Heart left ventricle (tissue), 16 donors: ENCODE measurements at regions of chr18 and their contacts with region 1.

Region 1: DNA sequence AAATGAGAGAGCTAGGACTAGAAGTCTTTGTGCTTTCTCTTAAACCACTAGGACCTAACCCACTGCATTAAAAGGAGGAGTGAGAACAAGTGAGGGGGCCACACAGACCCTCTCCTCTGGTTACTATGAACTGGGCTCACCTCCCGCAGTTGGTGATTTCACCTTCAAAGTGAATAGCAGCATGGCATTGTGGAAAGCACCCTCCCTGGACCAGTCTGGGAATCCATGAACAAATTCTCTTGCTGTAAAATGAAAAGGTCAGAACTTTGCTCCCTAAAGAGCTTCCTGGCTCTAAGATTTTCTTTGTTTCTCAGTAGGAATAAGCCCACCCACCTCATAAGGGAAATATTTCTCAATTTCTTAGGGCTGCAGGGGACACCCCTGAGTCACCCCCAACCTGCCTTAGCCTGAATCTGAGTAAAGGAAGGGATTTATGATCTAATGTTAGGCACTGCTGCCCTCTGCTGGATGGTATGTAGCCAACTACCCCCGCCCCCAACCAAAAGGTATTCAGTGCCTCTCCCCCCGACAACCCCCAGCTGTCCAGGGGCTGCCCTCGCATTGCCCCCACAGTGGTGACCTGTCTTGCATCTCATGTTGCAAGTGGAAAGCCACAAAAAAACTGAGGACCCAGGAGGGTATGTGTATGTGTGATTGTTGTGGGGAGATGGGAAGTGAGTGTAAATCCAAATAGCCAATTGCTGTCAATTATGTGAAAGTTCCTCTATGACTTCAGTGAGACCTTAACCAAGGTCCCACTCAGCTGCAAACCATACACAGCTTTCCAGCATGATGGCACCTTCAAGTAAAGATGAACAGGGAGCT is 230.9 kb upstream of the SLC14A2 start:
- DNase-seq: peak in 4 of 5 donors; percentile 30 to 41 (median 39)
- ATAC-seq: peak; percentile 56 to 77 (median 72)
- H3K4me3 ChIP-seq: no peak overlapping the region
- H3K27ac ChIP-seq: no peak overlapping the region
- H3K4me1 ChIP-seq: peaks cover 0 to 9% (median 0%) of the 10 kb centered on the region in 12 donors
- H3K27me3 ChIP-seq: peaks cover 0 to 6% (median 0%) of the 10 kb centered on the region in 9 donors
- CTCF ChIP-seq: peak; percentile 43 to 79 (median 64)
- POLR2A ChIP-seq: no peak

Region 2: DNA sequence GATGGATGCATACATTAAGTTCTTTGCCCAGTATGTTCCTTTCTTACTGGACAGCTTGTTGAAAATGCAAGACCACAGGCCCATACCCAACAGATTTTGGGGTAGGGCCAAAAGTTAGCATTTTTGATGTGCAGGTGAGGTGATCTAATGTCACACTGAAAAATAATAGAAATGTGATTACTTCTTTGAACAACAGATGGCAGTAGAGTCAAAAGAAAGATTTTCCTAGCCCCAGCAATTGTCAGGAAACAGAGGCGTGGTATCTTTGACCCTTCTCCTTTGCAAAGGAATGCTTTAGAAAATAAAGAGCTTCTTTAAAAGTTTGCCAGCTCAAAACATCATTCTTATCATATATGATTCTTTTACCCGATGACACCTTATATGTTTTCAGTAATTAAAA is 1763.4 kb before region 1 on chr18:
- intact Hi-C with region 1: loop called in 9 of 10 experiments (anchors 5 to 10 kb)
- DNase-seq: no peak
- ATAC-seq: peak in 2 of 4 donors; percentile 46 to 57
- H3K4me3 ChIP-seq: no peak overlapping the region
- H3K27ac ChIP-seq: no peak overlapping the region
- H3K4me1 ChIP-seq: no peaks in the 10 kb centered on the region
- H3K27me3 ChIP-seq: no peaks in the 10 kb centered on the region
- CTCF ChIP-seq: peak; percentile 41 to 71 (median 54)
- POLR2A ChIP-seq: no peak

Region 3: DNA sequence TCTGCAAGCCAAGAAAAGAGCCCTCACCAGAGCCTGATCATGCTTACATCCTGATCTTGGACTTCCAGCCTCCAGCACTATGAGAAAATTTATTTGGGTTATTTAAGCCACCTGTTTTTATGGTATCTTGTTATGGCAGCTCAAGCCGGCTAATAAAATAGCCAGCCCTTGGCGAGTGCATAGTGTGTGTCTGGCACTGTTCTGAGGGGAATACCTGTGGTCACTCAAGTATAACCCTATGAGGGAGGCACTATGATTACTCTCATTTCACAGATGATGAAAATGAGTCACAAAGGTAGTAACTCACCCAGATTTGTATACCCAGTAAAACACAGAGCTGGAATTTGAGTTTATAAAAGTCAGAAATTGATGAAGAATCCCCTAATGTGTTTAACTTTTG is 1260.6 kb before region 1 on chr18:
- intact Hi-C with region 1: loop called in 2 of 10 experiments (anchors 5 to 10 kb)
- DNase-seq: no peak
- ATAC-seq: no peak
- H3K4me3 ChIP-seq: no peak overlapping the region
- H3K27ac ChIP-seq: no peak overlapping the region
- H3K4me1 ChIP-seq: no peaks in the 10 kb centered on the region
- H3K27me3 ChIP-seq: no peaks in the 10 kb centered on the region
- CTCF ChIP-seq: no peak
- POLR2A ChIP-seq: no peak

Region 4: DNA sequence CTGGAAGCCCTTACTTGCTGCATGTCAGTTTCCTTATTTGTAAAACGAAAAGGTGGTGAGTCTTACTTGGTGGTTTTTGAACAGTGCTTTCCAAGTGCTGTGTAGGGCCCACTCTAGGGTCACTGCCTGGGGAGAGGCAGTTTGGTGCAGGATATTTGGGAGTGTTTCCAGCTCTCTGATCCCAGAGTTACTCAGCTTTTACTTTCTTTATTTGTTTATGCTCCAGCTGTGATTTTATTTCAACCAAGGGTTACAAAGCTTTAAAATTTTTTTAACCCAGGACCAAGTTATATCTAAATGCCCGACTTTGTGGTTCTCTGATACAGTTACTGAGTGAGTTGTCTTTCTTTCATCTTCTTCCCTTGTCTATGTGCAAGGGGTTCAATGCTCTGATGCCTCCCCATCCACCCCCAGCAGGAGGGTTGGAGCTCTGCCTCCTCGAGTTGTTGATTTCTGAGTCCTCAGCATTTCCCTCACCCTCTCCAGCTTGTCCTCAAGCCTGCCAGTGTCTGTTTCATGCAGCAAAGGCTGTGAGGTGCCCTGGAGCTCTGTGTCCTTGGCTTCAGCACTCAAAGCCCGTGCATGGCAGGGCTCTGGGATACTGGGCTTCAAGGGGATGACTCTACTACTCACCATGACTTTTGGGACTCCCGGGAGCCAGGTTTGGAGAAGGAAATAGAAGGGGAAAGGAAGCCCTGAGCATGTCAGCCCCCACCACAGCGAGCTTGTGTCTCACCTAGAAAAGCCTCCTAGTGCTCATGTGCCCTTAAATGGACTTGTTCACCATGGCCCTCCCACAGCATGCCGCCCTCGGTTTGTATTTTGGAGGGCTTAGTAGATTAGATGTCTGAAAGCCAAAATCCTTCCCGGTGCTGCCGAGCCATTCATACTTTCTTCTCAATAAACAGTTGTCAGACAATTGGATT is 466.9 kb before region 1 on chr18:
- intact Hi-C with region 1: loop called in 1 of 10 experiments (anchors 10 kb)
- DNase-seq: no peak
- ATAC-seq: peak; percentile 61 to 76 (median 68)
- H3K4me3 ChIP-seq: no peak overlapping the region
- H3K27ac ChIP-seq: peak overlapping the region in 2 of 12 donors; percentile 6 to 52
- H3K4me1 ChIP-seq: peaks cover 0 to 35% (median 15%) of the 10 kb centered on the region in 12 donors
- H3K27me3 ChIP-seq: no peaks in the 10 kb centered on the region
- CTCF ChIP-seq: no peak
- POLR2A ChIP-seq: no peak

Region 5: GRCh38 chr18:45317948-45318640 is 66.3 kb before region 1 on chr18:
- intact Hi-C with region 1: loop called in 1 of 10 experiments (anchors 10 kb)
- DNase-seq: no peak
- ATAC-seq: no peak
- H3K4me3 ChIP-seq: no peak overlapping the region
- H3K27ac ChIP-seq: no peak overlapping the region
- H3K4me1 ChIP-seq: peaks cover 0 to 20% (median 8%) of the 10 kb centered on the region in 12 donors
- H3K27me3 ChIP-seq: no peaks in the 10 kb centered on the region
- CTCF ChIP-seq: no peak
- POLR2A ChIP-seq: no peak

Region 6: GRCh38 chr18:45637546-45638327 is 253.4 kb after region 1 on chr18:
- intact Hi-C with region 1: no loop called
- DNase-seq: no peak
- ATAC-seq: no peak
- H3K4me3 ChIP-seq: no peak overlapping the region
- H3K27ac ChIP-seq: peak overlapping the region in 1 of 12 donors; percentile 57
- H3K4me1 ChIP-seq: peaks cover 0 to 4% (median 0%) of the 10 kb centered on the region in 12 donors
- H3K27me3 ChIP-seq: peaks cover 0 to 10% (median 0%) of the 10 kb centered on the region in 9 donors
- CTCF ChIP-seq: no peak
- POLR2A ChIP-seq: no peak